ENCODE measurements at regions of chrX and their contacts with region 1.

Region 1: GRCh38 chrX:56248492-56248891 is 16.3 kb downstream of the KLF8 start:
- DNase-seq: no peak
- H3K4me3 ChIP-seq: no peak overlapping the region
- H3K27ac ChIP-seq: no peak overlapping the region
- H3K4me1 ChIP-seq: no peaks in the 10 kb centered on the region
- H3K27me3 ChIP-seq: no peaks in the 10 kb centered on the region
- CTCF ChIP-seq: peak; percentile 72 to 79

Region 2: GRCh38 chrX:54891573-54891972 is 1356.9 kb before region 1 on chrX:
- CTCF ChIA-PET with region 1: no interaction called
- dilution Hi-C with region 1: no loop called
- in situ Hi-C with region 1: no loop called
- intact Hi-C with region 1: loop called (anchors 10 kb)
- DNase-seq: peak; percentile 37
- H3K4me3 ChIP-seq: no peak overlapping the region
- H3K27ac ChIP-seq: no peak overlapping the region
- H3K4me1 ChIP-seq: no peaks in the 10 kb centered on the region
- H3K27me3 ChIP-seq: no peaks in the 10 kb centered on the region
- CTCF ChIP-seq: peak; percentile 49 to 57

Region 3: DNA sequence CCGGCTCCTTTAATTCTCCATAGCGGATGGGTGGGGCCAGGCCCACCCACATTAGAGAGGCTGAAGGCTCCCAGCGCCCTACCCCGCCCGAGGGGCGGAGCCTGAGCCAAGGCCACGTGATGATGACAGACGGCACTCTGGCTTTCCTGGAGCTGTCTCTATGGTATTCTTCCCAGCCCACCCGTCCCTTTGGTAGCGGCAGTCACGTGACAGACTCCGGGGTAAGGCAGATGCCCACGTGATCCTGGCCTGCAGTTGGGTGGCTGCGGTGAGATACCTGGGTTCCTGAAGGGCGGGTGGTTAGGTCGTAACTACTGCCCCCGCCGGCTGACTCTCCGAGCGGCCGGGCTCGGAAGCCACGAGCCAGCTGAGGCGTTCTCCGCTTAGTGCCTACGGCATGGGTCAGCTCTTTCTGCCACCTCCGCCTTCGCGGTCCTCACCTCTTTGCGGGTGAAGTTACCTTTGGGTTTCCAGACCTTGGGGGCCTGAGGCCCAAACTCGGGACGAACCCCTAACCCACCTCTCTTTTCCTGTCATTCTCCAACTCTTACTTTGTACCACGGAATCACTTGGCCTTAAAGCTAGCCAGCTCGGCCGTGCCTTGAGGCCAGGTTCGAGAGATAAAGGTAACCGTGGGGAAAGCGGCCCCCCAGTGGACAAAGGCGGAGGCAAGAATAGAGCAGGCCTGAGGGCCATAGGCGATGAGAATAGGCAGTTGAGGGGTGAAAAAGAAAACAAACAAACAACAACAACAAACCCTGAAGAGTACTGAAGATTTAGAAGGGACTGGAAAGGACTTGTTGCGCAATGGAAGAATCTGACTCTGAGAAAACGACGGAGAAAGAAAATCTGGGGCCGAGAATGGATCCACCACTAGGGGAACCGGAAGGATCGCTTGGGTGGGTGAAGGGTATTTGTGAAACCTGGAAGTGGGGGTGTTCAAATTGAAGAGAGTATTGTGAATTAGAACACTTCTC is 530.7 kb before region 1 on chrX and contains the start of gene RRAGB:
- CTCF ChIA-PET with region 1: no interaction called
- dilution Hi-C with region 1: no loop called
- in situ Hi-C with region 1: no loop called
- intact Hi-C with region 1: loop called (anchors 10 kb)
- DNase-seq: peak; percentile 89
- H3K4me3 ChIP-seq: peak within 1 kb of the TSS; percentile 47 to 66 (median 55)
- H3K27ac ChIP-seq: peak within 1 kb of the TSS; percentile 62
- H3K4me1 ChIP-seq: no peaks in the 10 kb centered on the region
- H3K27me3 ChIP-seq: no peaks in the 10 kb centered on the region
- CTCF ChIP-seq: peak; percentile 21 to 54
- total RNA-seq, gene RRAGB: 5.8 to 16.3 TPM

Region 4: DNA sequence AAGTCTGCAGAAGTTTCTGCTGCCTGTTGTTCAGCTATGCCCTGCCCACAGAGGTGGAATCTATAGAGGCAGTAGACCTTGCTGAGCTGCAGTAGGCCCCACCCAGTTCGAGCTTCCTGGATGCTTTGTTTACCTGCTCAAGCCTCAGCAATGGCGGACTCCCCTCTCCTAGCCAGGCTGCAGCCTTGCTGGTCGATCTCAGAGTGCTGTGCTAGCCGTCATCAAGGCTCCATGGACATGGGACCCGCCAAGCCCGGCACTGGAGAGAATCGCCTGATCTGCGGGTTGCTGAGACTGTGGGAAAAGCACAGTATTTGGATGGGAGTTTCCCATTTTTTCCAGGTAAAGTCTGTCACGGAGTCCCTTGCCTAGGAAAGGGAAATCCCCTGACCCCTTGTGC is 141.2 kb before region 1 on chrX:
- CTCF ChIA-PET with region 1: no interaction called
- dilution Hi-C with region 1: no loop called
- in situ Hi-C with region 1: no loop called
- intact Hi-C with region 1: no loop called
- DNase-seq: no peak
- H3K4me3 ChIP-seq: no peak overlapping the region
- H3K27ac ChIP-seq: no peak overlapping the region
- H3K4me1 ChIP-seq: no peaks in the 10 kb centered on the region
- H3K27me3 ChIP-seq: no peaks in the 10 kb centered on the region
- CTCF ChIP-seq: no peak

Region 5: GRCh38 chrX:56219700-56220099 is 28.8 kb before region 1 on chrX:
- CTCF ChIA-PET with region 1: interaction called, 3 read pairs
- dilution Hi-C with region 1: no loop called
- in situ Hi-C with region 1: no loop called
- intact Hi-C with region 1: loop called (anchors 1 kb)
- DNase-seq: no peak
- H3K4me3 ChIP-seq: no peak overlapping the region
- H3K27ac ChIP-seq: no peak overlapping the region
- H3K4me1 ChIP-seq: no peaks in the 10 kb centered on the region
- H3K27me3 ChIP-seq: peaks cover 2% of the 10 kb centered on the region
- CTCF ChIP-seq: peak; percentile 29 to 38

Region 6: DNA sequence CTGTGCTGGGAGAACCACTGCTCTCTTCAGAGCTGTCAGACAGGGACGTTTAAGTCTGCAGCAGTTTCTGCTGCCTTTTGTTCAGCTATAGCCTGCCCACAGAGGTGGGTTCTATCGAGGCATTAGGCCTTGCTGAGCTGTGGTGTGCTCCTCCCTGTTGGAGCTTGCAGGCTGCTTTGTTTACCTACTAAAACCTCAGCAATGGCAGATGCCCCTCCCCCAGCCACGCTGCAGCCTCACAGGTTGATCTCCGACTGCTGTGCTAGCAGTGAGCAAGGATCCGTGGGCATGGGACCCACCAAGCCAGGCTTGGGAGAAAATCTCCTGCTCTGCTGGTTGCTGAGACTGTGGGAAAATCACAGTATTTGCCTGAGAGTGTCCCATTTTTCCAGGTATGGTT is 181.1 kb after region 1 on chrX:
- CTCF ChIA-PET with region 1: no interaction called
- dilution Hi-C with region 1: no loop called
- in situ Hi-C with region 1: no loop called
- intact Hi-C with region 1: no loop called
- DNase-seq: no peak
- H3K4me3 ChIP-seq: no peak overlapping the region
- H3K27ac ChIP-seq: no peak overlapping the region
- H3K4me1 ChIP-seq: no peaks in the 10 kb centered on the region
- H3K27me3 ChIP-seq: no peaks in the 10 kb centered on the region
- CTCF ChIP-seq: no peak

Region 7: GRCh38 chrX:56783450-56783831 is 534.9 kb after region 1 on chrX:
- CTCF ChIA-PET with region 1: no interaction called
- dilution Hi-C with region 1: no loop called
- in situ Hi-C with region 1: no loop called
- intact Hi-C with region 1: no loop called
- DNase-seq: peak; percentile 63
- H3K4me3 ChIP-seq: peak overlapping the region; percentile 19 to 44 (median 26)
- H3K27ac ChIP-seq: no peak overlapping the region
- H3K4me1 ChIP-seq: no peaks in the 10 kb centered on the region
- H3K27me3 ChIP-seq: peaks cover 4% of the 10 kb centered on the region
- CTCF ChIP-seq: peak; percentile 26 to 53